Caco-2 (cell line): ENCODE measurements at regions of chr17 and their contacts with region 1.

Region 1: DNA sequence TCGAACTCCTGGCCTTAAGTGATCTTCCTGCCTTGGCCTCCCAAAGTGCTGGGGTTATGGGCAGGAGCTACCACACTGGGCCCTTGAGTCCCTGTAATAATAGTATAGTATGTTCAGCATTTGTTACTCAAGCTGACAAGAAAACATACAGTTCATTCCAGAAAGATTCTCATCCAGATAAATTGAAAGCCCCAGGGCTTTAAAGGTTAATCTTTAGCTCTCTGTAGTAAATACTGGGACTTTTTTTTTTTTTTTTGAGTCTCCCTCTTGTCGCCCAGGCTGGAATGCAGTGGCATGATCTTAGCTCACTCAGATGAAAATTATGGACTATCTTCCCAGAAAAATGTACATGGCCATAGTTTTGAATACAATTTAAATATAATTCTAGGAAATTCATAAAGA is 11.0 kb downstream of the BRCA1 start:
- DNase-seq: peak; percentile 69 to 77
- H3K4me3 ChIP-seq: no peak overlapping the region
- H3K4me3 Mint-ChIP-seq: no peak overlapping the region
- H3K27ac Mint-ChIP-seq: peak overlapping the region; percentile 69
- H3K4me1 ChIP-seq: peaks cover 26% of the 10 kb centered on the region
- H3K4me1 Mint-ChIP-seq: peaks cover 25% of the 10 kb centered on the region
- H3K27me3 ChIP-seq: no peaks in the 10 kb centered on the region
- H3K27me3 Mint-ChIP-seq: no peaks in the 10 kb centered on the region
- CTCF ChIP-seq: no peak

Region 2: DNA sequence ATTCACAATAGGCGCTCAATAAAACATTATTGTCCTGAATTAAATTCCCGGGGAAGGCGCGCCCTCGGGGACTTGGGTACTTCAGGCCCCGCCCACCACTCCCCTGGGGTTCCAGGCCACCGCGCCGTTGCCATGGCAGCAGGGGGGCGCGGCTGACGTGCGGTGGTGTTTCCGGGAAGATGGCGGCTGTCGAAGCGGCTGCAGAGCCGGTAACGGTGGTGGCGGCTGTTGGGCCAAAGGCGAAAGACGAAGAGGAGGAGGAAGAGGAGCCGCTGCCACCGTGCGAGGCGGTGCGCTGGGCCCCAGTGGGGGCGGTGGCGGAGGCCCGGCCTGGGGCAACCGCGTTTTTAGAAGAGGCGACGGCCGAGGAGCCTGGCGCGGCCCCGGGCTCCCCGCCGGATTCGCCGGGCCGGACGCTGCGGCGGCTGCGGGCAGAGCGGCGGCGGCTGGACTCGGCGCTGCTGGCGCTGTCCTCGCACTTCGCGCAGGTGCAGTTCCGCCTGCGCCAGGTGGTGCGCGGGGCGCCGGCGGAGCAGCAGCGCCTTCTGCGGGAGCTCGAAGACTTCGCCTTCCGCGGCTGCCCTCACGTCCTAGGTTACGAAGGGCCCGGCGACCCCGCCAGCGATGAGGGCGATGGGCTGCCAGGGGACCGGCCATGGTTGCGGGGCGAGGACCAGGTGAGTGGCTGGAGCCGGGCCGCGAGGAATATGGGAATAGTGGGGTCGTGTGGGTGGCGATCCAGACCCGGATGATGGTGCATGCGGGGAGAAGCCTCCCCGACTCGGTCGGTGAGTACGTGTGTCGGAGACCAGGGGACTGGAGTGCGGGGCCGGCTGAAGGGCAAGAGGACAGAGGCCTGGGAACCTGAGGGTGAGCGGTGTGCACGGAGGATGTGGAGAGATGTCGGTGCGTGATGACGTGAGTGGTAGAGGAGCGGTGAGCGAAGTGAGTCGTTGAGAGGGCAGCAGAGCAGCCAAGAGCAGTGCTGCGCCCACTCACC is 133.5 kb before region 1 on chr17 and contains the start of gene RUNDC1:
- CTCF ChIA-PET with region 1: no interaction called
- POLR2A ChIA-PET with region 1: no interaction called
- intact Hi-C with region 1: no loop called
- DNase-seq: peak; percentile 91 to 94
- H3K4me3 ChIP-seq: peak within 1 kb of the TSS; percentile 100
- H3K4me3 Mint-ChIP-seq: peak within 1 kb of the TSS; percentile 100
- H3K27ac Mint-ChIP-seq: peak within 1 kb of the TSS; percentile 96
- H3K4me1 ChIP-seq: peaks cover 7% of the 10 kb centered on the region; the same call in 1 of the 2 replicates
- H3K4me1 Mint-ChIP-seq: peaks cover 12% of the 10 kb centered on the region
- H3K27me3 ChIP-seq: no peaks in the 10 kb centered on the region
- H3K27me3 Mint-ChIP-seq: no peaks in the 10 kb centered on the region
- CTCF ChIP-seq: peak in 1 of 2 experiments; percentile 55
- total RNA-seq, gene RUNDC1: 17.6 and 18.2 TPM in 2 replicates

Region 3: DNA sequence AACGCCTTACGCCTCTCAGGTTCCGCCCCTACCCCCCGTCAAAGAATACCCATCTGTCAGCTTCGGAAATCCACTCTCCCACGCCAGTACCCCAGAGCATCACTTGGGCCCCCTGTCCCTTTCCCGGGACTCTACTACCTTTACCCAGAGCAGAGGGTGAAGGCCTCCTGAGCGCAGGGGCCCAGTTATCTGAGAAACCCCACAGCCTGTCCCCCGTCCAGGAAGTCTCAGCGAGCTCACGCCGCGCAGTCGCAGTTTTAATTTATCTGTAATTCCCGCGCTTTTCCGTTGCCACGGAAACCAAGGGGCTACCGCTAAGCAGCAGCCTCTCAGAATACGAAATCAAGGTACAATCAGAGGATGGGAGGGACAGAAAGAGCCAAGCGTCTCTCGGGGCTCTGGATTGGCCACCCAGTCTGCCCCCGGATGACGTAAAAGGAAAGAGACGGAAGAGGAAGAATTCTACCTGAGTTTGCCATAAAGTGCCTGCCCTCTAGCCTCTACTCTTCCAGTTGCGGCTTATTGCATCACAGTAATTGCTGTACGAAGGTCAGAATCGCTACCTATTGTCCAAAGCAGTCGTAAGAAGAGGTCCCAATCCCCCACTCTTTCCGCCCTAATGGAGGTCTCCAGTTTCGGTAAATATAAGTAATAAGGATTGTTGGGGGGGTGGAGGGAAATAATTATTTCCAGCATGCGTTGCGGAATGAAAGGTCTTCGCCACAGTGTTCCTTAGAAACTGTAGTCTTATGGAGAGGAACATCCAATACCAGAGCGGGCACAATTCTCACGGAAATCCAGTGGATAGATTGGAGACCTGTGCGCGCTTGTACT is 11.2 kb after region 1 on chr17 and contains the start of gene BRCA1:
- CTCF ChIA-PET with region 1: interaction called, 20 read pairs
- POLR2A ChIA-PET with region 1: interaction called, 23 read pairs
- intact Hi-C with region 1: loop called (anchors 1 kb)
- DNase-seq: peak; percentile 98 to 99
- H3K4me3 ChIP-seq: peak within 1 kb of the TSS; percentile 90
- H3K4me3 Mint-ChIP-seq: peak within 1 kb of the TSS; percentile 98
- H3K27ac Mint-ChIP-seq: peak within 1 kb of the TSS; percentile 99
- H3K4me1 ChIP-seq: peaks cover 18% of the 10 kb centered on the region
- H3K4me1 Mint-ChIP-seq: no peaks in the 10 kb centered on the region
- H3K27me3 ChIP-seq: no peaks in the 10 kb centered on the region
- H3K27me3 Mint-ChIP-seq: no peaks in the 10 kb centered on the region
- CTCF ChIP-seq: no peak
- total RNA-seq, gene BRCA1: 50.8 and 51.1 TPM in 2 replicates

Region 4: DNA sequence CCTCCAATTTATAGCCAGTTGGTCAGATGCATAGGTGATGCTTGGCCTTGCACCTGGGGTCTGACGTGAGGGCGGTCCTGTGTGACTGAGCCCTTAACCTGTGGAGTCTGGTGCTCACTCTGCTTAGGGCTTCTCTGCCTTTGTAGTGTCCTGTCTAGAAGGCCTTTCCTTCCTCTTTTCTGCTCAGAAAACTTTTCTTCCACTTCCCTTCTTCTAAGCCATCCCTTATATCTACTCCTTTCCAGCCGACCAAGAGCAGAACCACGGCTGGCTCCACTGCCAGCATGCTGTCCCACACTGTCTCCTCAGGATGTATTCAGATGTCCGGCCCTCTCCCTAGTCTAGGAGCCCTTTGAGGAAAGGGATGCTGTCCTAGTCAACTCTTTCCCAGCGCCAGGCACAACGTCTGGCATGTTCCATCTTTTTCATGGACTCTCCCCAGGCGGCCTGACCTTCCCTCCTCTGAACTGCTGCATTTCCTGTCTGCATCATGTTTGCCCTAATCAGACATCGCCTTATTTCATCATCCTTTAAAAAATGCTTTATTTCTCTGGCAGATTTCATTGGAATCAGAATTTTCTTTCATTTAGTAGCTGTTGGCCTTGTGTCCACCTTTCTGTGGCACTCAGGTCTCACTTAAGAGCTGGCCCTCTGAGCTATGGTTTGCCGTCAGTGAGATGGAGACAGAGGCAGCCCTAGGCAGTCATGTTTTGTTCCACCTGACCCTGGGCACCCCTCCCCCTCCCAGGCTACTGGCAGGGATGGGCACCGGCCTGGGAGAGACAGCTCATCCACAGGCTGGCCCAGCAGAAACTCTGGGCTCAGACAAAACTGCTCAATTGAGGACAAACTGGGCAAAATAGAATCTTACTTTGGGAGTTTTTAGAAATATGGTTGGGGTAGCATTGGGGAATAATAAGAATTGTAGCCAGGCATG is 26.5 kb after region 1 on chr17:
- CTCF ChIA-PET with region 1: no interaction called
- POLR2A ChIA-PET with region 1: interaction called, 11 read pairs
- intact Hi-C with region 1: no loop called
- DNase-seq: no peak
- H3K4me3 ChIP-seq: no peak overlapping the region
- H3K4me3 Mint-ChIP-seq: no peak overlapping the region
- H3K27ac Mint-ChIP-seq: no peak overlapping the region
- H3K4me1 ChIP-seq: no peaks in the 10 kb centered on the region
- H3K4me1 Mint-ChIP-seq: peaks cover 7% of the 10 kb centered on the region
- H3K27me3 ChIP-seq: no peaks in the 10 kb centered on the region
- H3K27me3 Mint-ChIP-seq: no peaks in the 10 kb centered on the region
- CTCF ChIP-seq: no peak

Region 5: DNA sequence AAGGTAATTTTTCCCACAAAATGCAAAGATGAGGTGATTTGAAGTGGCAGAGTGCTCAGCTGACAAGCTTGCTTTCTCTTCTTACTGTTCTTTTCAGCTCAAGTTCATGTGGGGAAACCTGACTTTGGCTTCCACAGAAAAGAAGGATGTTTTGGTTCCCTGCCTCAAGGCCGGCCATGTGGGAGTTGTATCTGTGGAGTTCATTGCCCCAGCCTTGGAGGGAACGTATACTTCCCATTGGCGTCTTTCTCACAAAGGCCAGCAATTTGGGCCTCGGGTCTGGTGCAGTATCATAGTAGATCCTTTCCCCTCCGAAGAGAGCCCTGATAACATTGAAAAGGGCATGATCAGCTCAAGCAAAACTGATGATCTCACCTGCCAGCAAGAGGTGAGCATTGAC is 79.1 kb after region 1 on chr17:
- CTCF ChIA-PET with region 1: no interaction called
- POLR2A ChIA-PET with region 1: no interaction called
- intact Hi-C with region 1: no loop called
- DNase-seq: peak in 1 of 2 experiments; percentile 1
- H3K4me3 ChIP-seq: no peak overlapping the region
- H3K4me3 Mint-ChIP-seq: no peak overlapping the region
- H3K27ac Mint-ChIP-seq: no peak overlapping the region
- H3K4me1 ChIP-seq: no peaks in the 10 kb centered on the region
- H3K4me1 Mint-ChIP-seq: no peaks in the 10 kb centered on the region
- H3K27me3 ChIP-seq: no peaks in the 10 kb centered on the region
- H3K27me3 Mint-ChIP-seq: no peaks in the 10 kb centered on the region
- CTCF ChIP-seq: no peak